BJ (cell line): ENCODE measurements at regions of chr6 and their contacts with region 1.

Region 1: GRCh38 chr6:122839477-122839876 is 50.4 kb downstream of the SMPDL3A start:
- DNase-seq: no peak
- H3K4me3 ChIP-seq: no peak overlapping the region
- H3K27me3 ChIP-seq: no peaks in the 10 kb centered on the region
- CTCF ChIP-seq: peak; percentile 61

Region 2: GRCh38 chr6:122730775-122731386 is 108.6 kb before region 1 on chr6:
- CTCF ChIA-PET with region 1: interaction called, 119 read pairs
- POLR2A ChIA-PET with region 1: no interaction called
- DNase-seq: peak; percentile 1
- H3K4me3 ChIP-seq: no peak overlapping the region
- H3K27me3 ChIP-seq: no peaks in the 10 kb centered on the region
- CTCF ChIP-seq: peak; percentile 78

Region 3: GRCh38 chr6:122751326-122751725 is 88.2 kb before region 1 on chr6:
- CTCF ChIA-PET with region 1: interaction called, 79 read pairs
- POLR2A ChIA-PET with region 1: no interaction called
- DNase-seq: no peak
- H3K4me3 ChIP-seq: no peak overlapping the region
- H3K27me3 ChIP-seq: no peaks in the 10 kb centered on the region
- CTCF ChIP-seq: no peak

Region 4: GRCh38 chr6:122789182-122790027 is 50.1 kb before region 1 on chr6 and contains the start of gene SMPDL3A:
- CTCF ChIA-PET with region 1: interaction called, 11 read pairs
- POLR2A ChIA-PET with region 1: no interaction called
- DNase-seq: peak; percentile 16
- H3K4me3 ChIP-seq: peak within 1 kb of the TSS; percentile 80
- H3K27me3 ChIP-seq: no peaks in the 10 kb centered on the region; the same call in 1 of the 2 replicates
- CTCF ChIP-seq: peak; percentile 50
- polyA plus RNA-seq, gene SMPDL3A: 6.4 and 10.4 TPM in 2 replicates

Region 5: DNA sequence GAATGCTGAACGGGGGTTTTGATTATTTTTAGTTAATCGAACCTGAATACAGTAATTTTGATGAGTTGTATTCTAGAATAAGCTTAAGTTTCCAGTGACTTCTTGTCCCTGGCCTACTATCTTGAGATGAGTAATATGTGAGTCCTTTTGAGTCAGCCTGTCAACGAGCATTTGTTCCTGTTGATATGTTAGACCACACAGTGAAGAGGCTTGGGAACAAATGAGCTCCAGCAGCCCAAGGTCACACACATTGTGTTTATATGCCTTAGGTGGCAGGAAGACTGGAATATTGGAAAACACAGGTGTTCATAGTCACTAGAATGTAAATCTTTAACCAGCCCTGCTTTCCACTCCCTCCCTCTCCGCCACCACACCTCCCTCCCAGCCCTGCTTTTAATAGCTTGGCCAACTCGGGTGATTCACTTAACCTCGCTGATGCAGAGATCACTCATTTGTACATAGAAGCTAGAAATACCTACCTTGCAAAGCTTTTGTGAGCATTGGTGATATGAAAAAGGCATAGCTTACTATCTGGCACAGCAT is 41.3 kb before region 1 on chr6:
- CTCF ChIA-PET with region 1: interaction called, 28 read pairs
- POLR2A ChIA-PET with region 1: no interaction called
- DNase-seq: peak; percentile 26
- H3K4me3 ChIP-seq: no peak overlapping the region
- H3K27me3 ChIP-seq: no peaks in the 10 kb centered on the region
- CTCF ChIP-seq: no peak

Region 6: DNA sequence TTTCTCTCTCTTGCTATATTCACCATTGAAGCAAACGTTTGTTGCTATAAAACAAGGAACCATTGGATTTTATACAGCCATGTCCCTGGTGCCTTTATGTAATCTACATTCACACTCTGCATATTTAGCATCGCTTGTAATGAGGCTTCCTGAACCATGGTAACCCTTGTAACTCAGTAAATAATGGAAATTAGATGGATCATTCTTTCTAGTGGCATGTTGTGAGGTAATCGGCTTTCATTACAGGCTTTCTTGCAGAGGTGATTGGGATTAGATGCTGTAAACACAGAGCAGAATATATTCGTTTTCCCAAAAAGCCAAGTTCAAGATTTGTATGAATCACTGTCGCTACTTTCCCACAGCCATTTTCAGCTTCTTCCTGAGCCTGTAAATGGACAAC is 14.3 kb before region 1 on chr6:
- CTCF ChIA-PET with region 1: interaction called, 25 read pairs
- POLR2A ChIA-PET with region 1: no interaction called
- DNase-seq: no peak
- H3K4me3 ChIP-seq: no peak overlapping the region
- H3K27me3 ChIP-seq: no peaks in the 10 kb centered on the region
- CTCF ChIP-seq: no peak

Region 7: DNA sequence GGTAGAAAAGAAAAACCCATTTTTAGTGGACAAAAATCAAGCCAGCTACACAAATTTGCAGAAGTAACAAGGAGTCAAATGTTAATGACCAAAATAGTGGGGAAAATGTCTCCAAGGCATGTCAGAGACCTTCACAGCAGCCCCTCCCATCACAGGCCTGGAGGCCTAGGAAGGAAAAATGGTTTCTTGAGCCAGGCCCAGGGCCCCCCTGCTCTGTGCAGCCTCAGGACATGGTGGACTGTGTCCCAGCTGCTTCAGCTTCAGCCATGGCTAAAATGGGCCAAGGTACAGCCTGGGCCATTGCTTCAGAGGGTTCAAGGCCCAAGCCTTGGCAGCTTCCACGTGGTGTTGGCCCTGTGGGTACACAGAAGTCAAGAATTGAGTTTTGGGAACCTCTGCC is 74.1 kb after region 1 on chr6:
- CTCF ChIA-PET with region 1: no interaction called
- POLR2A ChIA-PET with region 1: no interaction called
- DNase-seq: no peak
- H3K4me3 ChIP-seq: no peak overlapping the region
- H3K27me3 ChIP-seq: no peaks in the 10 kb centered on the region
- CTCF ChIP-seq: no peak